CD4-positive, alpha-beta T cell (primary cell): ENCODE measurements at regions of chr14 and their contacts with region 1.

Region 1: DNA sequence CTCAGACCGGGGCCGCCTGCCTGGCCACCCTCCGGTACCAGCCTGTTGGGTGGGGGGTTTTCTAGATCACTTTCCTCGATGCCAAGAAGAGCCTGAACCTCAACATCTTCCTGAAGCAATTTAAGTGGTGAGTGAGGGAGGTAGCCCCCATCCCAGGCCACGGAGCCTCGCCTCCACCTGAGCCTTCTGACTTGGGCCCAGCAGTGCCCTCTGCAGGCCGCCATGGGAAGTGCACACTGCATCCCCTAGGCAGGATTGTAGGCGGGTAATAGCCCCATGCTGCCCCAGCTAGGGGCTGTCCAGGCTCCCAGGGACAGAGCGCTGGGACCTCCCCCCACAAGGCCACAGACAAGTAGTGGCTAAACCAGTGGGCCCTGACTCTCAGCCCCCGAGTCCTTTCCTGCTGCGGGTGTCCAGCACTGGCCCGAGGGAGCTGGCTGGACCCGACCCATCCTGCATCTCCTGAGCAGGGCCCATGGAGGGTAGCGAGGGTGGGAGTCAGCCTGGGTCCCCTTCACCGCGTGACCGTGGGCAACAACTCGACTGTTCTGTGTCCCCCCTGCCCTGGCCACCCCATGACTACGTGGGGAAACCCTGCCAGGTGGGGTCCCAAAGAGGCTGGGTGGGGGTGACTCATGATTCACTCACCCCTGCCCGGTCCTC is 15.3 kb upstream of the ADSS1 start:
- DNase-seq: peak; percentile 65 to 86 (median 70)
- ATAC-seq: peak; percentile 97
- H3K4me3 ChIP-seq: no peak overlapping the region
- H3K4me3 Mint-ChIP-seq: no peak overlapping the region
- H3K27ac ChIP-seq: no peak overlapping the region
- H3K27ac Mint-ChIP-seq: peak overlapping the region; percentile 13
- H3K4me1 ChIP-seq: peaks cover 8% of the 10 kb centered on the region
- H3K4me1 Mint-ChIP-seq: peaks cover 5% of the 10 kb centered on the region
- H3K27me3 ChIP-seq: no peaks in the 10 kb centered on the region
- H3K27me3 Mint-ChIP-seq: no peaks in the 10 kb centered on the region
- CTCF ChIP-seq: peak; percentile 96

Region 2: GRCh38 chr14:104137297-104138097 is 571.2 kb before region 1 on chr14:
- CTCF ChIA-PET with region 1: no interaction called
- POLR2A ChIA-PET with region 1: no interaction called
- intact Hi-C with region 1: loop called in 1 of 2 experiments (anchors 5 kb)
- DNase-seq: peak; percentile 15 to 75 (median 55)
- ATAC-seq: peak; percentile 67
- H3K4me3 ChIP-seq: peak overlapping the region; percentile 29
- H3K4me3 Mint-ChIP-seq: peak overlapping the region; percentile 63
- H3K27ac ChIP-seq: no peak overlapping the region
- H3K27ac Mint-ChIP-seq: no peak overlapping the region
- H3K4me1 ChIP-seq: peaks cover 26% of the 10 kb centered on the region
- H3K4me1 Mint-ChIP-seq: peaks cover 4% of the 10 kb centered on the region
- H3K27me3 ChIP-seq: peaks cover 50 to 61% of the 10 kb centered on the region in 2 experiments
- H3K27me3 Mint-ChIP-seq: peaks cover 43% of the 10 kb centered on the region
- CTCF ChIP-seq: peak; percentile 83

Region 3: GRCh38 chr14:104639889-104640548 is 68.7 kb before region 1 on chr14:
- CTCF ChIA-PET with region 1: no interaction called
- POLR2A ChIA-PET with region 1: no interaction called
- intact Hi-C with region 1: no loop called
- DNase-seq: peak in 12 of 14 experiments; percentile 18 to 68 (median 38)
- ATAC-seq: peak; percentile 73
- H3K4me3 ChIP-seq: no peak overlapping the region
- H3K4me3 Mint-ChIP-seq: no peak overlapping the region
- H3K27ac ChIP-seq: no peak overlapping the region
- H3K27ac Mint-ChIP-seq: no peak overlapping the region
- H3K4me1 ChIP-seq: peaks cover 6% of the 10 kb centered on the region
- H3K4me1 Mint-ChIP-seq: peaks cover 4% of the 10 kb centered on the region
- H3K27me3 ChIP-seq: peaks cover 6 to 13% of the 10 kb centered on the region in 2 experiments
- H3K27me3 Mint-ChIP-seq: peaks cover 15% of the 10 kb centered on the region
- CTCF ChIP-seq: peak; percentile 66

Region 4: DNA sequence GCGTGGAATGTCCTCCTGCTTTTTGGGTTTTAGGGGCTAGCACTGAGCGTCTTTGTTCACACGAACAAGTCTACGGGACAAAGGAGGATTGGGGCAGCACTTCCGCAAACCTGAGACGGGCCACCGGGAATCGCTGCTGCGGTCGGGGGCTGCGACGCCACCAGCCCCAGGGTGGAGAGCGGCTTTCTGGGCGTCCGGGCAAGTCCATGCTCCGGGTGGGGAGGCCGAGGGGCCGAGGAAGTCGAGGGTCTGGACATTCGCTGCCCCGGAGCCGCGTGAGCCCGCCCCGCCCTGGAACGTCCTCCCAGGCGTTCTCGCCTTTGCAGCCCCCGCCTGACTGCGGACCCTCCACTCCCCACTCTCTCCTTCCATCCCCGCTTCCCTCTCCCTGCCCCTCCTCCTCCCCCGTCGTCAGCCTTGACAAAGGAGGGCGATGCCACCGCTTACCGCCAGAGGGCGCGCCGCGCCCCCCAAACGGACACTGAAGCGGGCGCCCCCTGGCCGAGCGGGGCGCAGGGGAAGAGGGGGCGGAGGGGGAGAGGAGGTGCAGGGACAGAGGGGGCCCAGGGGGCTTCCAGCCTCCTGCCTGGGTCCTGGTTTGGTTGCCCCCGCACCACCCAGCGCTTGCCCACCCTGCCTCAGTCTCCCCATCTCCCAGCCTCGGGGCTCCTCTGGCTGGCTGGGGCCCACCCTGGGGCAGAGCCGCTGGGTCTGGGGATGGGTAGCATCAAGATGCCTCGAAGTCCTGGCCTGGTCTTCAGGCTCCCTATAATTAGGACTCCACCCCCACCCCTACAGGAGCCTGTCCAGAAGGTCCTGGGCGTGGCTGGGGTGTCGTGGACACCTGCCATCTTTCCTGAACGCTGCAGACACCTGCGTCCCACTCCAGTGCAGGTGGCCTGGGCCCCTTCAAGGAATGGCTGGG is 58.4 kb before region 1 on chr14:
- CTCF ChIA-PET with region 1: no interaction called
- POLR2A ChIA-PET with region 1: no interaction called
- intact Hi-C with region 1: loop called (anchors 1 kb)
- DNase-seq: peak; percentile 45 to 79 (median 58)
- ATAC-seq: peak; percentile 77
- H3K4me3 ChIP-seq: peak overlapping the region; percentile 40
- H3K4me3 Mint-ChIP-seq: no peak overlapping the region
- H3K27ac ChIP-seq: no peak overlapping the region
- H3K27ac Mint-ChIP-seq: no peak overlapping the region
- H3K4me1 ChIP-seq: peaks cover 10% of the 10 kb centered on the region
- H3K4me1 Mint-ChIP-seq: peaks cover 4% of the 10 kb centered on the region
- H3K27me3 ChIP-seq: peaks cover 0 to 6% of the 10 kb centered on the region in 2 experiments
- H3K27me3 Mint-ChIP-seq: no peaks in the 10 kb centered on the region
- CTCF ChIP-seq: peak; percentile 91

Region 5: DNA sequence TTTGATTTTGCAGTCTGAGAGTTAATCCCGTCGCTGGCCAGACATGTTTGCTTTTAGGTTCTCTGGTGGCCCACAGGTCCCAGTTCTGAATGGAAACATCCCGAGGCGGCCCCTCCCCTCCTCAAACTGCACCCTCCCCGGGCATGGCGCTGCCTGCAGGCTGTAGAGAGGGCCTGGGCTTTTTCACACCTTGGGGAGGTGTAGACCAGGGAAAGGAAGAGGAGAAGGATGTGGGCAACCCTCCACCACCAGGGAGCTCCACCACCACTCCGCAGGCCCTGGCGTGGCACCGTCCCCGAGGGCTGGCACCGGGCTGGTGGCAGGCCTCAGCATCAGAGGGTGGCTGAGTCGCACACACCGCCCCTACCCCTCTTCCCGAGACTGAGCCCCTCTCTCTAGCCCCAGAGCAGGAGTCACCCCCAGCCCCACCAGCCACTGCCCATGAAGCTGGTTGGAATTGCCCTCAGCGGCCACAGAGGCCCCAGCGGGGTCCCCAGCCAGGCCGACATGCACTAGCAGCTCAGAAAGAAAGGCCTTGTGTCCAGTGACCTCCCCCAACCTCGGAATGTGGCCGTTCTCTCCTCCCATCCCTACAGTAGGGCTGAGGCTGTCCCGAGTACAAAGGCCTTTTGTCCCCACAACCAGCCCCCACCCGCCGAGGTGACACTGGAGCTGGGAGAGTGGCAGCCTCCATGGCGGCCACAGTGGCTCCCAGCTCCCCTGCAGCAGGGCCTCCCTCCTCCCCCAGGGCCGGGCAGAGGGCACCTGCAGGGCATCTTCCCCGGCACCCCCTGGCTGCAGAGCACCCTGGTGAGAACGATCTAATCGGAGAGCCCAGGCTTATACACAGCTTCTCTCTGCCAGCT is 42.8 kb before region 1 on chr14:
- CTCF ChIA-PET with region 1: interaction called, 3 read pairs
- POLR2A ChIA-PET with region 1: interaction called, 8 read pairs
- intact Hi-C with region 1: loop called (anchors 1 kb)
- DNase-seq: peak; percentile 28 to 78 (median 50)
- ATAC-seq: peak; percentile 93
- H3K4me3 ChIP-seq: no peak overlapping the region
- H3K4me3 Mint-ChIP-seq: peak overlapping the region; percentile 25
- H3K27ac ChIP-seq: no peak overlapping the region
- H3K27ac Mint-ChIP-seq: peak overlapping the region; percentile 63
- H3K4me1 ChIP-seq: peaks cover 30% of the 10 kb centered on the region
- H3K4me1 Mint-ChIP-seq: peaks cover 32% of the 10 kb centered on the region
- H3K27me3 ChIP-seq: no peaks in the 10 kb centered on the region
- H3K27me3 Mint-ChIP-seq: peaks cover 6% of the 10 kb centered on the region
- CTCF ChIP-seq: peak; percentile 69

Region 6: DNA sequence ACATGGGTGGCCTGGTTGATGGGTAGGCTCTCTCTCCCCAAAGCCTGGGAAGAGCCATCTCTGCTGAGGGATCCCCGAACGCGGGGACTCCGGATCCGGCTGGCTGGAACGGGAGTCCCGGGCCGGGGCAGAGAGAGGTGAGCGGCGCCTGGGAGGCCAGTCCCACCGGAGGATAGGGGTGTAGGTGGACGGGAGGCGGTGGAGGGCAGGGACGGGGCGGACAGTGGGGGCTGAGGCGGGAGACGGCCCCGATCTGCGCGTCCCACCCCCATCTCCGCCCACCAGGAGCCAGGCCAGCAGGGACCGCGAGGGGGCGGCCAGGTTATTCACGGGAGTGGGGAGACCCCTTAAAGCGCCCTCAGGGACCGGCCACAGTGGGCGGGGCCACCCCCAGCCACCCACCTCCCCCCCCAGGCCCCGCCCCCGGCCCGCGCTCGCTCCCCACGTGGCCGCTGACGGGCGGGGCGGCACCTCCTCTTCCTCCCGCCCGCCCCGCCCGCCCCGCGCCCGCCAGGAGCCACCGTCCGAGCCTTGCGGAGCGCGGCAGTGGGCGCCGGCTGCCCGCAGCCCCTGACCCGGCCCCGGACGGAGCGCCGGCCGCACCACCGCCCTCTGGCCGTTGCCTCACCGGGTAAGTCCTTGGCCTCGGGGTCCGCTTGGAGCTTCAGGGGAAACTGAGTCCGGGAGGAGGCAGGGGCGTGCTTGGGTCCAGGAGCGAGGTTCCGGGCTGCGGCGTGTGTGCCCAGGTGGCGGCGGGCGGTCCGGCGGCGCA is 19.4 kb before region 1 on chr14 and contains the start of gene INF2:
- CTCF ChIA-PET with region 1: no interaction called
- POLR2A ChIA-PET with region 1: no interaction called
- intact Hi-C with region 1: loop called in 1 of 2 experiments (anchors 2 kb)
- DNase-seq: peak; percentile 14 to 81 (median 42)
- ATAC-seq: peak; percentile 62
- H3K4me3 ChIP-seq: peak within 1 kb of the TSS; percentile 61
- H3K4me3 Mint-ChIP-seq: peak within 1 kb of the TSS; percentile 89
- H3K27ac ChIP-seq: peak within 1 kb of the TSS in 1 of 2 donors; percentile 29
- H3K27ac Mint-ChIP-seq: no peak within 1 kb of the TSS
- H3K4me1 ChIP-seq: peaks cover 80% of the 10 kb centered on the region
- H3K4me1 Mint-ChIP-seq: peaks cover 51% of the 10 kb centered on the region
- H3K27me3 ChIP-seq: no peaks in the 10 kb centered on the region
- H3K27me3 Mint-ChIP-seq: no peaks in the 10 kb centered on the region
- CTCF ChIP-seq: no peak
- total RNA-seq, gene INF2: 74.9 to 76.9 TPM